Head of caudate nucleus (tissue), 42 donors: ENCODE measurements at regions of chr3 and their contacts with region 1.

Region 1: DNA sequence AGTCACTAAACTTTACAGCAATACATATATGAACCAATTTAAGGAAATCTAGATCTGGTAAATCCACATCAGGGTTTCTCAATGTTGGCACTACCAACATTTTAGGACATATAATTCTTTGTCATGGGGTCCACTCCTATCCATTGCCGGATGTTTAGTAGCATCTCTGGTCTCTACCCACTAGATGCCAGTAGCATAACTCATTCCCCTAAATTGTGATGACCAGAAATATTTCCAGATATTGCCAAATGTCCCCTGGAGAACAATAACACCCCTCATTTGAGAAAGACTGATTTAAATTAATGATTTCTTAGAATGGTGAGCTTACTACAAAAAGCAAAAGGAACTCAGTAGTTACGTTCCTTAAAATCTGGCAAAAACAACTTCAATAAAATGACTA is 23.1 kb upstream of the ANKRD28 start:
- DNase-seq: no peak

Region 2: GRCh38 chr3:15616053-15616452 is 204.9 kb before region 1 on chr3:
- intact Hi-C with region 1: no loop called
- DNase-seq: no peak

Region 3: DNA sequence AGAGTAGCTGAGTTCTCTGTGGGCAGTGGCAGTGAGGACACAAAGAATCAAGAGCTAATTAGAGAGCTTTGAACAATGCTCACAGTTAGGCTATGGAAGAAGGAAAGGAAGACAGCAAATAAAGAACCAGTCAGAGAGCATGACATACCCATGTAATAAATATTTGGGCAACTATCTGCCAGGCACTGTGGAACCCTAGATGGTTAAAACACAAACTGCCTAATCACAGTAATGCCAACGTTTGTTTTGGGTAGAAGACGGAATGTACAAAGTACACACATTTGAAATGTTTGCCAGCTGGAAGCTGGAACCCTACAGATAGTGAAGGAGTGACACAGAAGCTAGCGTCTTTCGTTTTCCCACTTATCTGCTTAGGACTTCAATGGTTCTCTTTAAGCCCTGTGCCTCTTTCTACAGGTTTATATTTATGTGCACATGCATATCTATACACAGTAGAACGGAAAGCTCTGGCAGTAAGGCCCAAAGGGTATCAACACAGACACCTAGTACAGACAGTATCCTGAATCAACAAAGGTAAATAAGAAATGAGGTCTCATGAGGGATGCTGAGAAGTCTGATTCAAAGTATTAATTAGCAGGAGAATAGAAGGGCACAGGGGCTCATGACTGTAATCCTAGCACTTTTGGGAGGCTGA is 67.7 kb before region 1 on chr3:
- intact Hi-C with region 1: no loop called
- DNase-seq: peak in 3 of 42 donors; percentile 19 to 25 (median 25)

Region 4: DNA sequence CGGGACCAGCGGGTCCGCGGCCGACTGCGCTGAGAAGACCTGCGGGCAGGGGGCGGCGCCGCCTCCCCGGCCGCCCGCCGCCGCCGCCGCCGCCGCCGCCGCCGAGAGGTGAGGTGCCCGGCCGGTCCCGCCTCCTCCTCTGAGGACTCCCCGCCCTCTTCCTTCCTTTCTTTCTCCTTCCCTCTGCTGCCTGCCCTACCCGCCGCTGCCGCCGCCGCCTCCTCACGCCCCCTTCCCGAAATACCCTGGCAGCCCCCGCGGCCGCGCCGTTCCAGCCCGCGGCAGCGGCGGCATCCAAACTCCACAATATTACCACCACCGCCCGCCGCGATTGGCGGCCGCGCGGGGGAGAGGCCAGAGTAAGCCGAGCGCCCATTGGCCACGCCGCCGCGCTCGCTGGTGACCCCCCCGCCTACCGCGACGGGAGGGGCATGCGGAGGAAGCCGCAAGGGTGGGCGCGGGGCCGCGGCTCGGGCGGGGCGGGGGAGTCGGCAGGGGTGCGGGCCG is 38.6 kb after region 1 on chr3:
- intact Hi-C with region 1: loop called (anchors 5 kb)
- DNase-seq: peak; percentile 62 to 95 (median 90)

Region 5: GRCh38 chr3:16247276-16248061 is 426.6 kb after region 1 on chr3:
- intact Hi-C with region 1: loop called (anchors 5 kb)
- DNase-seq: peak; percentile 65 to 94 (median 86)